Sciatic nerve (tissue), 2 donors: ENCODE measurements at regions of chr7 and their contacts with region 1.

Region 1: GRCh38 chr7:46396481-46396880 is 475.4 kb upstream of the IGFBP3 start:
- DNase-seq: no peak
- ATAC-seq: peak; percentile 62

Region 2: GRCh38 chr7:46432666-46433065 is 36.2 kb after region 1 on chr7:
- intact Hi-C with region 1: loop called (anchors 1 kb)
- DNase-seq: no peak
- ATAC-seq: no peak